Activated CD4-positive, alpha-beta memory T cell treated with anti-CD3 and anti-CD28 coated beads, Interleukin-2, amount 10 ng/mL, durations not matched to agents 7 days and 5 days (primary cell): ENCODE measurements at regions of chr6 and their contacts with region 1.

Region 1: DNA sequence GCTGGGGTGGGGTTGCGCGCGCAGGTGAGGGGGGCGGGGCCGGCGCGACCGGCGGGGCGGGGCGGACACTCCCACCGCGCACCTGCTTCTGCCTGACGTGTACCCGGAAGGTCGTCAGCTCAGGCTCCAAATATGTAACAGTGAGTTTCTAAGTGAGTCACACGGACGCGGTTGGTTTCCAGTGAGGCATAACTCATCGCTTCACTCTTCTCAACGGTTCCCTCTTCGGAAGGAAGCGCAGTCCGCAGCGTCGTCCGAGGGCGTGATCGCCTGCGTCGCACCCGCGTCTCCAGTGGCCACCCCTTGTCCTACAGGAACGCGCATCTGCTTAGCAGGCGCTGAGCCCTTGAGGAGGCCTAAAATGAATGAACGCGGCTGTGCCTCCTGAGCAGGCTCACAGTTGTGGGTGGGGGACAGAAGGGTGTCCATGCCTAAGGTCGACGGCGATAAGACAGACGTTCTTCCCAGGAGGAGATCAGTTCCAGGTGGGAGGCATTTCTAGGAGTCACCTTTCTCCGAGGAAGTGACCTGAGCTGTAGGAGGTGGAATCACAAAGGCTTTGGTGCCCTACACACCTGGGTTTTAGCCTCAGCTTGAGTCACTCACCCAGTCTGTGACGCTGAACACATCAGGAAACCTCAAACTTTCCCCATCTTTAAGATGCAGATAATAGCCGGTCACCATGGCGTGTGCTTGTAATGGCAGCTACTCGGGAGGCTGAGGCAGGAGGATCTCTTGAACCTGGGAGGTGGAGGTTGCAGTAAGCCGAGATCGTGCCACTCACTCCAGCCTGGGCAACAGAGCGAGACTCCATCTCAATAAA is 50.9 kb upstream of the EZR start:
- DNase-seq: peak; percentile 96
- H3K4me3 Mint-ChIP-seq: peak overlapping the region; percentile 73
- H3K27ac Mint-ChIP-seq: peak overlapping the region; percentile 96
- H3K4me1 Mint-ChIP-seq: peaks cover 33% of the 10 kb centered on the region
- H3K27me3 Mint-ChIP-seq: peaks cover 19% of the 10 kb centered on the region

Region 2: DNA sequence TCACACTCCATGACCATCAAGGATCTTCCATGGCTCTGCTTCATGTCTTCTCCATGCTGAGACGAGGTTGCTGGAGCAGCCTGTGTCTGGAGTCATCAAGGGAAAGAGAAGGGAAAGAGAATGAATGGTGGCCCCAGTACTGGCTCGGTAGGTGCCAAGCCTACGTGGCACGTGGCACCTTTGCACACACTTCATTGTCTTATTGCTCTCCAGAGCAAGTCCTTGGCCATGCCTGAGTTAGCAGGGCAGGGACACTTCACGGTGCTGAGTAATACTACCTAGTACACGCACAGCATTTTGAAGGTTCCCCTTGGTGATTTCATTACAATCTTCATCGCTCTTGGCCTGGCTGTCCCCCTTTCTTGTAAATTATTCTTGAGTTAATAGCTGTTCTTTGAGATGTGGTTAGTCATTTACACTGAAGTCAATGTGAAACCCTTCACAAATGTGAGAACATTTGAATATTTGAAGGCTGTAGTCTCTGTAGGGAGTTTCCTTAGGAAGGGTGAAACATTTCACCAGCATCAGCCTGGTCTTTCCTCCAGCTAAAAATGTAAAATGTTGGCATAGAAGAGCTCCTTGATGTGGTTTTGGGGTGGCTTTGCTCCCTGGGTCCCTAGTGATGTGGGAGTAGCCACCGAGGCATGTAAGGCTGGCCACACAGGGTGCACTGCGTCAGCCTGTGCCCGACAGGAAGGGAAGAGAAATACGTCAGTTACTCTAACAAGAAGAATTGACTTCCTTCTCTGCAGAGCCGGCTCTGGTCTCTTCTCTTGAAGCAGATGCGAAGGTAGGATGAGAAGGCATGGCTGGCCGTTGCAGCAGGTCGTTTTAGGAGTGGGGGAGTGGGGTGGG is 220.5 kb before region 1 on chr6 and contains the start of gene SYTL3:
- CTCF ChIA-PET with region 1: interaction called, 3 read pairs
- POLR2A ChIA-PET with region 1: interaction called, 10 read pairs
- DNase-seq: peak; percentile 82
- H3K4me3 Mint-ChIP-seq: peak within 1 kb of the TSS; percentile 73
- H3K27ac Mint-ChIP-seq: peak within 1 kb of the TSS; percentile 90
- H3K4me1 Mint-ChIP-seq: peaks cover 76% of the 10 kb centered on the region
- H3K27me3 Mint-ChIP-seq: no peaks in the 10 kb centered on the region
- total RNA-seq, gene SYTL3: 133 to 135 TPM

Region 3: GRCh38 chr6:158758451-158758861 is 111.6 kb before region 1 on chr6:
- CTCF ChIA-PET with region 1: no interaction called
- POLR2A ChIA-PET with region 1: no interaction called
- DNase-seq: no peak
- H3K4me3 Mint-ChIP-seq: no peak overlapping the region
- H3K27ac Mint-ChIP-seq: peak overlapping the region; percentile 19
- H3K4me1 Mint-ChIP-seq: no peaks in the 10 kb centered on the region
- H3K27me3 Mint-ChIP-seq: no peaks in the 10 kb centered on the region

Region 4: GRCh38 chr6:158803733-158804143 is 66.3 kb before region 1 on chr6:
- CTCF ChIA-PET with region 1: interaction called, 5 read pairs
- POLR2A ChIA-PET with region 1: interaction called, 19 read pairs
- DNase-seq: peak; percentile 73
- H3K4me3 Mint-ChIP-seq: peak overlapping the region; percentile 18
- H3K27ac Mint-ChIP-seq: peak overlapping the region; percentile 66
- H3K4me1 Mint-ChIP-seq: peaks cover 88% of the 10 kb centered on the region
- H3K27me3 Mint-ChIP-seq: no peaks in the 10 kb centered on the region

Region 5: GRCh38 chr6:158819213-158819909 is 50.7 kb before region 1 on chr6 and contains the start of gene EZR:
- CTCF ChIA-PET with region 1: interaction called, 9 read pairs
- POLR2A ChIA-PET with region 1: interaction called, 57 read pairs
- DNase-seq: peak; percentile 82
- H3K4me3 Mint-ChIP-seq: peak within 1 kb of the TSS; percentile 99
- H3K27ac Mint-ChIP-seq: peak within 1 kb of the TSS; percentile 77
- H3K4me1 Mint-ChIP-seq: peaks cover 28% of the 10 kb centered on the region
- H3K27me3 Mint-ChIP-seq: no peaks in the 10 kb centered on the region
- total RNA-seq, gene EZR: 225 to 228 TPM

Region 6: DNA sequence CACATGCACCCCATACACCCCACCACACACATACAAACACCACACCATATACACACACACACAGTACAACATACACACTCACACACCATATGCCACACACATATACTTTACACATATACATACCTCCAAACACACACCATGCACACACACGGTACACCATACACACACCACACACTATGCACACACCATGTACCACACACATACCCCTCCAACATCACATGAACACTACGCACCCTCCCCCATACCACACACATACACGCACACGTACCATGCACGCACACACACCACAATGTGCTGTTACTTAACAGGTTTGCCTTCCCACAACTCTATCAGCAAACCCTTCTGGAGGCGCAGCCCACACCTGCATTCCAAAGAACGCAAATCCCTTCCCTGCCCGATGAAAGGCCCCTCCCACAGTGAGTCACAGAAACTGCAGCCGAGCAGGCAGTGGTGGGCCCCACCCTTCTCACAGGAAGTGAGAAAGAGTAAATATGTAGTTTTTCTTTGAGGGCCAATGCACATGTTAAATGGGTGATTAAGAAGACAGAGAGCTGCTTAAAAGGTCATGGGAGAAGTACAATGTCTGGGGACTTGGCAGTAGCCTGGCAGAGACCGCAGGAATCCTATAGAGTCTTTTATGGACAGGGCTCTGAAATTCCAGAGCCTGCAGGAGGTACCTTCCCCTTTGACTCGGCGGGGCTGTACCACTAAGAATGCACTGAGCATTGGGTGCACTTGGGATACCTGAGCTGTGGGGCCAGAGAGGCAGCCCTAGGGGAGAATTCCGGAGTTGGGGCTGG is 16.8 kb before region 1 on chr6:
- CTCF ChIA-PET with region 1: interaction called, 62 read pairs
- POLR2A ChIA-PET with region 1: interaction called, 227 read pairs
- DNase-seq: peak; percentile 90
- H3K4me3 Mint-ChIP-seq: no peak overlapping the region
- H3K27ac Mint-ChIP-seq: no peak overlapping the region
- H3K4me1 Mint-ChIP-seq: peaks cover 36% of the 10 kb centered on the region
- H3K27me3 Mint-ChIP-seq: peaks cover 6% of the 10 kb centered on the region

Region 7: GRCh38 chr6:158938811-158939254 is 68.8 kb after region 1 on chr6:
- CTCF ChIA-PET with region 1: no interaction called
- POLR2A ChIA-PET with region 1: no interaction called
- DNase-seq: peak; percentile 26
- H3K4me3 Mint-ChIP-seq: peak overlapping the region; percentile 21
- H3K27ac Mint-ChIP-seq: no peak overlapping the region
- H3K4me1 Mint-ChIP-seq: peaks cover 12% of the 10 kb centered on the region
- H3K27me3 Mint-ChIP-seq: peaks cover 20% of the 10 kb centered on the region